Naive thymus-derived CD4-positive, alpha-beta T cell (primary cell): ENCODE measurements at regions of chr9 and their contacts with region 1.

Region 1: DNA sequence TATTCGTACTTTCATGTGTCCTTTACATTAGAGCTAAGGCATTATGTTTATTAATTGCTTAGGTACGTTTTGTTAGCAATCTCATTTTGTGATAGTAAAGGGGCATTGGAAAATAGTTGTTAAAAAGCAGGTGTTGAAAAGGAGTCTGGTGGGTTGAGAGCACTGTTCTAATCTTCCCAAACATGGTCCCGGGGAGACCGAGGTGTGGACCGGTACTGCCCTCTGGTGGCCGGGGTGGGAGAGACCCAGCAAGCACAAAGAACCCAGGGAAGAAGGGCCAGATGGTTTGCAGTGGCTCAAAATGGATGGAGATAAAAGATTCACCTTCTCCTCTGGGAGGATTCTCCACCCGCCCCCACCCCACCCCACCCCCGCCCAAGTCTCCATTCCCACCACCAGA is 26.1 kb downstream of the IDNK start:
- DNase-seq: peak; percentile 59 to 79 (median 68)
- ATAC-seq: peak; percentile 91
- H3K4me3 ChIP-seq: no peak overlapping the region
- H3K4me3 Mint-ChIP-seq: no peak overlapping the region
- H3K27ac ChIP-seq: no peak overlapping the region
- H3K27ac Mint-ChIP-seq: peak overlapping the region in 4 of 9 donors; percentile 0 to 59 (median 34)
- H3K4me1 ChIP-seq: no peaks in the 10 kb centered on the region
- H3K4me1 Mint-ChIP-seq: peaks cover 0 to 6% (median 0%) of the 10 kb centered on the region in 7 donors
- H3K27me3 ChIP-seq: no peaks in the 10 kb centered on the region
- H3K27me3 Mint-ChIP-seq: no peaks in the 10 kb centered on the region

Region 2: GRCh38 chr9:83334320-83334719 is 314.8 kb before region 1 on chr9:
- CTCF ChIA-PET with region 1: interaction called, 7 read pairs
- POLR2A ChIA-PET with region 1: no interaction called
- intact Hi-C with region 1: loop called (anchors 1 kb)
- DNase-seq: peak; percentile 5 to 75 (median 36)
- ATAC-seq: peak; percentile 81
- H3K4me3 ChIP-seq: no peak overlapping the region
- H3K4me3 Mint-ChIP-seq: no peak overlapping the region
- H3K27ac ChIP-seq: no peak overlapping the region
- H3K27ac Mint-ChIP-seq: no peak overlapping the region
- H3K4me1 ChIP-seq: no peaks in the 10 kb centered on the region
- H3K4me1 Mint-ChIP-seq: peaks cover 0 to 6% (median 0%) of the 10 kb centered on the region in 7 donors
- H3K27me3 ChIP-seq: no peaks in the 10 kb centered on the region
- H3K27me3 Mint-ChIP-seq: peaks cover 0 to 1% (median 0%) of the 10 kb centered on the region in 5 donors

Region 3: DNA sequence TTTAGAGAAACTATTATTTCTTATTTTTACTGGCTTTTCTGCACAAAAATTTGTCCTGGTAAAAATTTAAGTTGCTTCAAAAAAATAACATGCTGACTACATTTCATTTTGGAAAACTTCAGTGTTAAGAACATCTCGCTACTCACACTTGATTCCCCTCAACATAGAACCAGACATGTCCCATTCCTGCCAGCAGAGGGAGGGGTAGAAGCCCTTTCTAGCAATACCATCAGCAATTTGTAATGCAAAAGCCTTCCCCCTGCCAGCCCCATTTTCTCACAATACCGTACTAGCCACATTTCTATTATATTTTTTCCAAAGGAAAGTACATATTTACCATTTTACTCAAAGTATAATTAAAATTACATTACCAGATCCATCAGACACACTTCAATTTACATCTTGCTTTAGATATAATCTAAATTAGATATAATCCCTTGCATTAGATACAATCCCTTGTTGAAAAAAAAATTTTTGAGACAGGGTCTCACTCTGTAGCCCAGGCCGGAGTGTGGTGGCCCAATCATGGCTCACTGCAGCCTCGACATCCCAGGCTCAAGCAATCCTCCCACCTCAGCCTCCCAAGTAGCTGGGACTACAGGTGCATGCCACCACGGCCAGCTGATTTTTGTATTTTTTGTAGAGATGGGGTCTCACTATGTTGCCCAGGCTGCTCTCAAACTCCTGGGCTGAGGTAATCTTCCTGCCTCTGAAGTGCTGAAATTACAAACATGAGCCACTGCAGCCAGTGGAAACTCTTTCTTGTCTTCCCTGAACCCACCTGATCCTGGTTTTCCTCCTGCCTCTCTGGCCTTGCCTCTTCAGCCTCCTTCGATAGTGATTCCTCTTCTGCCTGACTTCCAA is 65.7 kb before region 1 on chr9:
- CTCF ChIA-PET with region 1: no interaction called
- POLR2A ChIA-PET with region 1: no interaction called
- intact Hi-C with region 1: loop called (anchors 1 to 2 kb)
- DNase-seq: peak in 7 of 9 donors; percentile 6 to 41 (median 24)
- ATAC-seq: peak; percentile 49
- H3K4me3 ChIP-seq: no peak overlapping the region
- H3K4me3 Mint-ChIP-seq: no peak overlapping the region
- H3K27ac ChIP-seq: no peak overlapping the region
- H3K27ac Mint-ChIP-seq: no peak overlapping the region
- H3K4me1 ChIP-seq: no peaks in the 10 kb centered on the region
- H3K4me1 Mint-ChIP-seq: no peaks in the 10 kb centered on the region
- H3K27me3 ChIP-seq: no peaks in the 10 kb centered on the region
- H3K27me3 Mint-ChIP-seq: no peaks in the 10 kb centered on the region

Region 4: DNA sequence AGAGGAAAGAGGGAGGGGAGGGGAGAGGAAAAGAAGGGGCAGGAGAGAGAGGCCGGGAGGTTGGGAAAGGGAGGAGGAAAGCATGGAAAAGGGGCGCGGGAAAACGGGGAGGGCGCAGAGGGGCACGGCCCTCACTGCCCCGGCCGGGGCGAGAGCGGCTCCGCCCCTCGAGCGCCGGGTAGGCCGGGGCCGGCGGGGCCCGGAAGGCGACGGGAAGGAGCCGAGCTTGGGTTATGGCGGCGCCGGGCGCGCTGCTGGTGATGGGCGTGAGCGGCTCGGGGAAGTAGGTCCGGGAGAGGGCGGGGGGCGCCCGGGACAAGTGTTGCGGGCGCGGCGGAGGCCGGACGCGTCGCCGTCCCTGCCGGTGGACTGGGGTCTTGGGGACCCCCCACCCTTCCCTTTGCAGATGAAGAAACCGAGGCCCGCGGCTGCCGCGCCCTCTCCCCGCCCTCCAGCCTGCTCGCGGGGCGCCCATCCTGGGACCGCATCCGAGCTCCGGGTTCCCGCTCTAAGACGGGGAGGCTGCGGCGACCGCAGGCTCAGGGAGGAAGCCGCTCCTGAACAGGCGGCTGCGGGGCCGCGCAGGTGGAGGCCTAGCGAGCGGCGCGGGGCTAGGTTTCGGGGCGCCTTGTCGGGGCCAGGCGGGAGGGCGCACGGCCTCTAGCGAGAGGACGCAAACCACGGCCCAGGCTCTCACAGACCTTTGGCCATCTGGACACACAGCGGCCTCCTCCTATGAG is 26.0 kb before region 1 on chr9 and contains the start of gene IDNK:
- CTCF ChIA-PET with region 1: interaction called, 34 read pairs
- POLR2A ChIA-PET with region 1: interaction called, 7 read pairs
- intact Hi-C with region 1: loop called (anchors 1 kb)
- DNase-seq: peak; percentile 52 to 76 (median 64)
- ATAC-seq: peak; percentile 90
- H3K4me3 ChIP-seq: peak within 1 kb of the TSS; percentile 59
- H3K4me3 Mint-ChIP-seq: peak within 1 kb of the TSS; percentile 90 to 96 (median 96)
- H3K27ac ChIP-seq: peak within 1 kb of the TSS; percentile 83
- H3K27ac Mint-ChIP-seq: peak within 1 kb of the TSS; percentile 74 to 98 (median 96)
- H3K4me1 ChIP-seq: peaks cover 8 to 11% of the 10 kb centered on the region in 2 donors
- H3K4me1 Mint-ChIP-seq: peaks cover 21 to 51% (median 30%) of the 10 kb centered on the region in 7 donors
- H3K27me3 ChIP-seq: no peaks in the 10 kb centered on the region
- H3K27me3 Mint-ChIP-seq: peaks cover 0 to 14% (median 0%) of the 10 kb centered on the region in 5 donors
- total RNA-seq, gene IDNK: 8.5 to 11.3 (median 10.9) TPM

Region 5: DNA sequence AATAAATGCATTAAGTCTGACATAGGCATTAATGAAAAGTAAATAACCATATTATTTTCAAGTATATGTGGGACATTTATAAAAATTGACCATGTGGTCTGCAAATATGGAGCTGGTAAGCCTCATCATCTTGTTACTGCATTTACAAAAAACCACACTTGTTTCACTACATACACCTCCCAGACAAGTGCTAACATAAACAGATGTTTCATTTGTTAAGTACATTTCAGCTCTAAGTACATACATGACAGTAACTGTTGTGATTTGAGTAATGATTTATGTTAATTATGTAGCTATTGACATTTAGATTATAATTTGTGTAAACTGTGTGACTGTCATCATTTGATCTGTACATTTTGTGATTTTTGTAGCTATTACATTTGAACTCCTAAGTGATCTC is 12.3 kb before region 1 on chr9:
- CTCF ChIA-PET with region 1: interaction called, 10 read pairs
- POLR2A ChIA-PET with region 1: no interaction called
- intact Hi-C with region 1: no loop called
- DNase-seq: no peak
- ATAC-seq: no peak
- H3K4me3 ChIP-seq: no peak overlapping the region
- H3K4me3 Mint-ChIP-seq: no peak overlapping the region
- H3K27ac ChIP-seq: no peak overlapping the region
- H3K27ac Mint-ChIP-seq: peak overlapping the region in 1 of 9 donors; percentile 43
- H3K4me1 ChIP-seq: no peaks in the 10 kb centered on the region
- H3K4me1 Mint-ChIP-seq: peaks cover 0 to 4% (median 0%) of the 10 kb centered on the region in 7 donors
- H3K27me3 ChIP-seq: no peaks in the 10 kb centered on the region
- H3K27me3 Mint-ChIP-seq: no peaks in the 10 kb centered on the region

Region 6: GRCh38 chr9:84583866-84584265 is 934.8 kb after region 1 on chr9:
- CTCF ChIA-PET with region 1: no interaction called
- POLR2A ChIA-PET with region 1: no interaction called
- intact Hi-C with region 1: no loop called
- DNase-seq: no peak
- ATAC-seq: no peak
- H3K4me3 ChIP-seq: no peak overlapping the region
- H3K4me3 Mint-ChIP-seq: no peak overlapping the region
- H3K27ac ChIP-seq: no peak overlapping the region
- H3K27ac Mint-ChIP-seq: no peak overlapping the region
- H3K4me1 ChIP-seq: no peaks in the 10 kb centered on the region
- H3K4me1 Mint-ChIP-seq: peaks cover 0 to 2% (median 0%) of the 10 kb centered on the region in 7 donors
- H3K27me3 ChIP-seq: no peaks in the 10 kb centered on the region
- H3K27me3 Mint-ChIP-seq: peaks cover 0 to 12% (median 3%) of the 10 kb centered on the region in 5 donors